Posterior cingulate gyrus (tissue), 11 donors: ENCODE measurements at regions of chr22 and their contacts with region 1.

Region 1: DNA sequence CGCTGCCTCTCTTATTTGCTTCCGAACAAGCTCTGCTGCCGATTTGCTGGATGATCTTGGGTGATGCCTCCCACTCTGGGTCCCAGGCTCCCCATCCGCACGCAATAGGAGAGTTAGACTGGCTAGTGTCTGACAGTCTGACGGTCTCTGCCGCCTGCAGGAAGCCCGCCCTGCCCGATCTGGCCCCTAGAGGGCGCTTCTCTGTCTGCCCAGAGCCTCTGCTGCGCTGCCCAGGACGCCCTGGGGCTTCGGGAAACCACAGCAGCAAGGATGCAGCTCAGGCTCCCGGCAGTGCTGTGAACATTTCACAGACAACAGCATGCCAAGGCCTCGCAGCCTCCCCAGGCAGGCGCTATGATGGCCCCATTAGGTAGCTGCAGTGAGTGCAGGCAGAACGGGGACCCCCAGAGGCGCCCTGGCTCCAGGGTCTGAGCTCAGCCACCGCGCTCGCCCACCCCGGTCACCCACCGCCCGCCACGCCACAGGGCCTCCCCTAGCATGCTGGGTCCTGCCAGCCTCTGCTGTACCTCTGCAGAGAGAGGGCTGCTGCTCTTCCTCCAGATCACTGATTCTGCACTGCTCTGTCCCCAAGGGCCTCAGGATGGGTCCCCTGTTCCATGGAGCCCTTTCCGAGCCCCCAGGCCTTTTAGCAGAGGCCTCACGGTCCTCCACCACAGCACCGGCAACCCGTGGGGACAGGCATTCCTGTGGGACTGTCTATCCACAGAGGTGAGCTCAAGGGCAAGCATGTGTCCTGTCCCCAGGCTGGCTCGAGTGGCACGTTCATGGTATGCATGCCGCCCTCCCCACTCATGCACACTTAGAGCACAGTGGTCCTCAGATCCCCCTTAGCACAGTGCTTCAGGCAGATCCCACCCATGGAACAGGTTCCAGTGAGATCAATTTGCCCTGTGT is 4.3 kb upstream of the BAIAP2L2 start:
- DNase-seq: peak; percentile 82 to 99 (median 92)

Region 2: DNA sequence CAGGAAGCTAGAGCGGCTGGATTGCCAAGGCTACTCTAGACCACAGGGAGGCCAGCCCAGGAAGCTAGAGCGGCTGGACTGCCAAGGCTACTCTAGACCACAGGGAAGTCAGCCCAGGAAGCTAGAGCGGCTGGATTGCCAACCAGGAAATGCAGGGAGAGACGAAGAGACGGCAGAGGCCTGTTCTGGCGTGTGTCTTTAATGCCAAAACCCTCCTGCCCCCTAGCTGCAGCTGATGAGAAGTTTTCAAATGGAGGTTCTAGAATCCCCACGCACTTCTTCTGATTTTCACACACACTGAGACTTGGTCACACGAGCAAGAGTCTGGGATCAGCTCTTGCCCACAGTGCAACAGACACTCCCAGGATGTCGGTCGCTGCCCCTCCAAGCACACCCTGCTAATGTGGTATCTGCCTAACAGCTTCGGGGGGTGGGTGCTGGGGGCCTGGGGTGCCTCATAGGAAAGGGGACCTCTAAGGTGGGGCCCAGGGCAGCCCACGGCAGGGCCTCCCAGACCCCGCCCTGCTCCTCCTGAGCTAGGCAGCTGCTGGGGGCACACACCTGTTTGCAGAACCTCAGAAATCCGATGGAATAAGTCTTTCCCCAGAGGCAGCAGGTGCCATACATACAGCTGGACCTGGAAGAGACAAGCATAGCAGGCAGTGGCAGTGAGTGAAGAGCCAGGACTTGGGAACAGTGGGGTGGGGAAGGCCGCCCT is 115.5 kb after region 1 on chr22:
- intact Hi-C with region 1: loop called (anchors 1 kb)
- DNase-seq: peak in 5 of 10 donors; percentile 51 to 96 (median 60)